Sciatic nerve (tissue), 2 donors: ENCODE measurements at regions of chr2 and their contacts with region 1.

Region 1: DNA sequence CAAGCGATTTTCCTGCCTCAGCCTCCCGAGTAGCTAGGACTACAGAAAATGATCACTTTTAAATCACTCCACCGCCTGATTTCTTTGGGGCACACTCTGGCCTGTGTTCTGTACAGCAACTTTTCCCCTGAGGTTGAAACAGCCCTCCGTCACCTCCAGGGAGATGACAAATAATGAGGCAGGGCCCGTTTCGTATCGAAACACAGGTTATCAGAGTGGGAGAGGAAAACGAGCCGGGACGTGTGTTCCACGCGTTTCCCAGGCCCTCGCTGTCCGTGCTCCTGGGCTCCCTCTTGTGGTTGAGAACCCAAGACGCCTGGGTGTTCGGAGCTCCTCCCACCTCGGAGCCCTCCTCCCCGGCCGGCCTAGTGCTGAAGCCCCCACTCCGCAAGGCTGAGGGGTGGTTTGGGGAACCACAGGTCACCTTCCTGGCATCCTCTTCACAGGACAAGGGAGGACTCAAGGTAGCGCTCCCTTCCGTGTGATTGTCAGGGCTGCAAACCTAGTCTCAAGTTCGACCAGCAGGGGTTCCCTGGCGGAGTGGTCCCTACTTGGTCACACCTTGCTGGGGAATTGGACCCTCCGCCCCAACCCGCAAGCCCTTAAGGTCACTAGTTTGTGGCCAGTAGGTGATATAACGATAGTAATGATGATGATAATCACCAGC is 12.8 kb downstream of the ATP6V1B1 start:
- DNase-seq: peak; percentile 91
- ATAC-seq: peak; percentile 97

Region 2: DNA sequence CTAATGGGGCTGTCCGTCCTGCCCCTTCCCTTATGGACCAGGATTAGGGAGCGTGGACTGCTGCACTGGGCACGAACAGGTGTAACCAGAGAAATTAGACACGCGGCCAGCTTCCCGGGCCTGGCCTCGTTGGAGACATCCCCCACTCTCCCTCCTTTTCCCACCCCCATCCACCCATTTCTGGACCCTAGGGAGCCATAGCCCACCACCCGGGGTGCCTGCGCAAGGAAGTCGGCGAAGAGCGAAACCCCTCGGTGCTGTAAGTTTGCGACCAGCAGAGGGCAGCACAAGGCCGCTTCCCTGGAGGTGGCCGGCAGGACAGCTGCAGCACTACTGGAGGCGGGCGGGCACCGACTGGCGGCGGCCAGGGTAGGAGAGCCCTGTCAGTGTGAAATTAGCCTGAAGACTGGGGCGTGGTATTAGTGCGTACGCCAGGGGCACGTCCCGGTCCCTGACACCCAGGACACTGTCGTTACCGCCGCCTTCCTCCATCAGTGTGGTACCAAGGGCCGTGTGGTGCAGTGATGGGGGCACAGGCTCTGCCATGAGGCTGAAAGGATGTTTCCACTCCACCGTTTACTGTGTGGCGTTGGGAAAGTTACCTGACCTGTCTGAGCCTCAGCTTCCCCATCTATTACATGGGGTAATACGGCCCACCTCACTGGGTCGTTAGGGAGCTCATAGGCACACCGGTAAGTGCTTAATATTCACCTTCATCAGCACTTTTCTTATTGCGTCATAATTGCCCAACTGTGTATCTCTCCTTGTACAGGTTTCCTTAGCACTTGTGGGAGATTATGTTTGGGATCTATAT is 76.9 kb before region 1 on chr2:
- intact Hi-C with region 1: loop called (anchors 5 kb)
- DNase-seq: peak; percentile 91
- ATAC-seq: peak; percentile 95

Region 3: GRCh38 chr2:70964596-70965386 is 16.3 kb after region 1 on chr2:
- intact Hi-C with region 1: no loop called
- DNase-seq: peak; percentile 86
- ATAC-seq: peak; percentile 90